GM18951 (cell line): ENCODE measurements at regions of chr4 and their contacts with region 1.

Region 1: DNA sequence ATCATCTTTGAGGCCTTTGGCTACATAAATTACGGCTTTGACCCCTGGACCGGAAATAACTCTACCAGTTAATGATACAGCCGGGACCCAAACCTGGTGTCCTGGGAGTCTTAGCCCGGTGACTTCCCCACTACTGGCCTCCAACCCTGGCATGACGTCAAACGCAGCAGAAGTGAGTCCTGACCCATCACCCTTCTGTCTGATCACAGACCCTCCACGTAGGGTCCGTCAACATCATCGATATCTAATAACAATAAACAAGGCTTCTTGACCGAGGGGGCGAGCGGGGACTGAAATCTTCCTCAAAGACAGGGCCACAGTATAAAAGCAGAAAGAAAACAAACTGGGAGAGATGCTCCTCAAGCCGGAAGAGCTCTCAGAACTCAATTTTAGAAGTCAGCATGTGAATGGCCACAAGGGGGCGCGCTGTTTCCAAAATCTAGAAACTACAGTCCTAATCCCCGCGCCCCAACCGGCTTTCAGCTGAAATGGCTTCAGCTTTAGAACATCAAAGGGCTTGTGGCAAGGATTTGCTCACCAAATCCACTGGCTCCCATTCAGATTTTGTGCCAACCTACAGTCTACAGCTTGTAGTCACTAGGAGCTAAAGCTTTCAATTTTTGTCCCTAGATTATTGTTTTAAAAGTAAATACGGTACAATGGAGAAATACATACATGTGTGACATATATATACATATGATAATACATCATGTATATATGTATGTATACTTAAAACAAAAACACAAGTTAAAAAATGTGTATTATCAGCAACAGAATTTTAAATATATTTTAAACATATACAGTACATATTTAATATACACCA is 46.4 kb upstream of the ENPP6 start:
- POLR2A ChIP-seq: peak; percentile 37

Region 2: DNA sequence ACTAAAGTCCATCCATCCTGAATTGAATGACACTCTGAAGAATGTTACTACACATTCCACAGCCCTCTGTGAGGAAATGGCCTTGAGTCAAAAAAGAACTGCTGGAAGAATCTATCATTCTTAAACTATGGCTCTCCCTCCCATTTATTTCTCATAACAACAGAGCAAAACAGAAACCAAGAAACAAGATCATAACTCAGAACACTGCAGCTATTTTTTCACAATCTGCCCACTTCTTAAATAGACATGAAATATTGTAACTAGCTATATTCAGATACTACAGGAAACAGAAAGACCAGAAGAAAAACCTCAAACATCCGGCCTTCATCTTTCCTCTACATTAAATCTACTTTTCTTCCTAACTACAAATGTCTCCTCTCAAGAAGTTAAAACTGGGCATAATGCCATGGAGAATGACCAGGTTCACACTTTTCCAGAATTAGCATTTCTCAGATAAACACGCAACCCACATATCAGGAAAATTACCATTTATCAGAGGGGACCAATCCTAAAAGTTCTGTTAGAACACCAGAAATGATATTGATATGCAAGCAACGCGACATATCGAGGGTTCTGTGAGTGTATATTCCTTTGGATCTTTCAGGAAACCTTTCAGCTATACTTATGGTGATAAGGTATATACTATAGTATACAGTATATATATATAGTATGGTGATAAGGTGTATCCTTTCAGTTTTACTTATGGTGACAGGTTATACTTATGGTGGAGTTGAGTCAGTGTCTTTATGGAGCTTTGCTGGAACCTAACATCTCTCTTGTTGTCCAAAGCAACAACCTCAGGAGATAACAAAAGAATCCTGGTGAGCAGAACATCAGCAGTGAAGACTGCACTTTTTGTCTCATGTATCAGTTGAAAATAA is 270.6 kb after region 1 on chr4:
- in situ Hi-C with region 1: loop called (anchors 5 kb)
- POLR2A ChIP-seq: no peak

Region 3: GRCh38 chr4:184983672-184984356 is 719.7 kb after region 1 on chr4:
- in situ Hi-C with region 1: loop called (anchors 25 kb)
- POLR2A ChIP-seq: no peak